Dorsolateral prefrontal cortex (tissue), 120 donors: ENCODE measurements at regions of chr2 and their contacts with region 1.

Region 1: DNA sequence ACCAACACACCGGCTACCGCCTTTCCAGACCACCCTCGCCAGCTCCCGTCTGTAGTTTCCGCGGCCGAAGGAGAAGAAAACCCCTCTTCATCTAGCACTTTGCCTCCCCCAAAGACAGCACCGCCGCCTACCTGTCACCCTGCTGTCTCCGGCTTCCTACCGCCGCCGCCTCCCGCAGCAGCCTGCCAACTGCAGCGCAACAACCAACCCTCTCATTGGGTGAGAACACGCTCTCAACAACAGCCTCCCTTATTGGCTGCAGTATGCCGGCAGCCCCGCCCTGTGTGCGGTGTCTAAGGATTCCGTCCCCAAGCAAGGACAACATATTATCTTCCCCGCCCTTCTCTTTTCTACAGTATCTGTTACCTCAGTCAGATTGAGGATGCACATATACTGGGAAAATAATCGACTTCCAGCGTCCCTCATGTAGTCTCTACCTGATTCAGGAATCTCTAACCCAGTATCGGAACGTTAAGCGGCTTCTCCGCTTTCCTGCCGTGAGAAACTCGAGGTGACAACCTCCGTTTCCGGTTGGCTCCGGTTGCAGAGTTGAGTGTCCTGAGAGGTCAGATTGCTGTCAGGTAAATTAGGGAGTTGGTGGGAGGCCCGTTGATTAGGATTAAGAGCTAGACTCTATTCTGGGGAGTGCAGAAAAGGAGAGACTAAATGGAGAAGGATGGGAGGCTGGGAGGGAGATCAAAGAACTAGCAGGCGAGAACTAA is at the starts of genes HYCC2 and NDUFB3:
- DNase-seq: peak; percentile 75 to 92 (median 90)
- H3K4me3 ChIP-seq: peak within 1 kb of the TSS; percentile 58 to 100 (median 95)
- H3K27ac ChIP-seq: peak within 1 kb of the TSS; percentile 69 to 98 (median 95)
- H3K27me3 ChIP-seq: no peaks in the 10 kb centered on the region
- CTCF ChIP-seq: peak in 54 of 56 donors; percentile 5 to 76 (median 46)
- total RNA-seq, gene HYCC2: 40.5 to 110 (median 79.7) TPM
- total RNA-seq, gene NDUFB3: 41.9 to 129 (median 85.4) TPM

Region 2: GRCh38 chr2:200609027-200609614 is 462.5 kb before region 1 on chr2:
- intact Hi-C with region 1: no loop called
- DNase-seq: no peak
- H3K4me3 ChIP-seq: no peak overlapping the region
- H3K27ac ChIP-seq: no peak overlapping the region
- H3K27me3 ChIP-seq: no peaks in the 10 kb centered on the region
- CTCF ChIP-seq: no peak

Region 3: GRCh38 chr2:200811336-200812121 is 260.1 kb before region 1 on chr2 and contains the start of gene BZW1:
- intact Hi-C with region 1: loop called in 1 of 2 experiments (anchors 5 kb)
- DNase-seq: peak; percentile 88 to 97 (median 95)
- H3K4me3 ChIP-seq: peak within 1 kb of the TSS; percentile 72 to 100 (median 95)
- H3K27ac ChIP-seq: peak within 1 kb of the TSS; percentile 84 to 100 (median 98)
- H3K27me3 ChIP-seq: no peaks in the 10 kb centered on the region
- CTCF ChIP-seq: peak in 8 of 56 donors; percentile 3 to 41 (median 20)
- total RNA-seq, gene BZW1: 80.5 to 158 (median 116) TPM

Region 4: DNA sequence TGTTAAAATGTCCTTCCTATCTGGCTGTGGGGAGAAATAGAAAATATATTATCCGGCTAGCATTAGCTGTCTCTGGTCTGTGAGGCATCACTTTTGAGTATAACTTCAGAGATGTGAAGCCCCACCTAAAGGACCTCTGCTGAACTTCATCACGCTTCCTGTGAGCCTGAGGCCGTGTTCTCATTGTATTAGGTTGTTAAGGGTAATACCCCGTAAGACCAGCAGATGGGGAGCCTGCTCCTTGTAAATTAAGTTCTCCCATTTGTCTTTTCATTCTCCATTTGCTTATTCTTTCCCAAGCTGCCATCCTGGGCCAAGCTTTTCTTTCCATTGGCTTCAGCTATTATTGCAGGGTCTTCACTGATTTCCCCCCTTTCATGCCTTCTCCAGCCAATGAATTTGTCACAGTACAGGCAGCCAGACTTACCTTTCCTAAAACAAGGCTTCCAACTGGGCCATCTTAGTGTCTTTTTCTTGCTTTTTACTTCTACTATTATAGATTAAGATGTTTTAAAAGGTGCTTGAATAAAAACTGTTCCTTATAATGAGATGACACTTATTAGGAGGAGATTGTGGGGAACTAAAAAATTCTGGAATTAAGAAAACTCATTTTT is 170.1 kb before region 1 on chr2:
- intact Hi-C with region 1: loop called (anchors 2 to 5 kb)
- DNase-seq: peak in 4 of 10 donors; percentile 9 to 67 (median 26)
- H3K4me3 ChIP-seq: peak overlapping the region in 1 of 59 donors; percentile 5
- H3K27ac ChIP-seq: peak overlapping the region in 5 of 59 donors; percentile 10 to 33 (median 19)
- H3K27me3 ChIP-seq: no peaks in the 10 kb centered on the region
- CTCF ChIP-seq: peak; percentile 23 to 79 (median 70)

Region 5: DNA sequence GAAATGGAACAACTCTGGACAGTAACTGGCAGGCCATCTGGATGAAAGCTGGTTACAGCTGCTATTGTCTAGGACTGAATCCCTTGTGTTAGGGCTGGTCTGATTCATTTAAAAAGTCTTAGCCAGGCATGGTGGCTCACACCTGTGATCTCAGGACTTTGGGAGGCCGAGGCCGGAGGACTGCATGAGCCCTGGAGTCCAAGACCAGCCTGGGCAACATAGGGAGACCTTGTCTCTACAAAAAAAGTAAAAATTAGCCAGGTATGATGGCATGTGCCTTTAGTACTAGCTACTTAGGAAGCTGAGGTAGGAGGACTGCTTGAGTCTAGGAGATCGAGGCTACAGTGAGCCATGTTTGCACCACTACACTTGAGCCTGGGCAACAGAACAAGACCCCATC is 28.9 kb after region 1 on chr2:
- intact Hi-C with region 1: no loop called
- DNase-seq: no peak
- H3K4me3 ChIP-seq: no peak overlapping the region
- H3K27ac ChIP-seq: no peak overlapping the region
- H3K27me3 ChIP-seq: no peaks in the 10 kb centered on the region
- CTCF ChIP-seq: no peak

Region 6: DNA sequence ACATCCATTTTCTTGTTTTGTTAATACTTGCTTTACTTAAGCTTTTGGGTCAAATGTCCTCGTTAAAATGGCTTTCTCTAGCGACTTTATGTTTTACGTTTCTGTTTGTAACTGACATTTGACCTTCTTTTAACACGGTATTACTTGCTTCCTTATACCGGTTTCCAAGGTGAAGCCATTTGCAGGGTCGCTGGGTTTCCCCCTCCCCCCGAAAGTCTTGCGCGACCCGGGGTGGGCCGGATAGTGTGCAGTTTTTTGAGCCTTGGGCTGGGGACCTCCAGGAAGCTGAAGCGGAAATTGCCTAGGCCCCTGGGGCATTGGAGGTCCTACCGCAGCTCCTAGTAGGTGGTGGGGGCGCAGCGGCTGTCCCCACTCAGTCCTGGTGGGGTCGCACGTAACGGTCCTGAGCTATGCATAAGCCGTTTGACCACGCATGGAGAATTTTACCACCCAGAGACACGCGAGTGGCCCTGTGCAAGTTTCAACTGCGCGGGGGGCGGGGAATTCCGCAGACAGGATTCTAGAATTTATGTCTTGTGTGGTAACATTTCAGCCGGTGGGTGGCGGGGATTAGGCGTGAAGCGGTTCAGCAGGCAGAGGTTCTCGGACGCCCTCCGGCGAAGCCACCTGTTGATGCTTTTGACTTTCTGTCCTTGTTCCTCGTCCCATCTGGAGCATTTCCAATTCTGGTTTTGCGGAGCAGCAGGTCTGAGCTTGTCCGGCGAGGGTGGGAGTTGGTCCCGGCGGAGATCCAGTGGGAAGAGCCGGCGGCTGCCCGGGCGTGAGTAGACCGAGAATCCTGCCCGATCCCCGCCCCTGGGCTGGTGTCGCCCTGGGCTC is 46.7 kb after region 1 on chr2:
- intact Hi-C with region 1: loop called (anchors 1 to 2 kb)
- DNase-seq: peak; percentile 68 to 85 (median 80)
- H3K4me3 ChIP-seq: peak overlapping the region; percentile 42 to 95 (median 84)
- H3K27ac ChIP-seq: peak overlapping the region; percentile 57 to 100 (median 98)
- H3K27me3 ChIP-seq: peaks cover 0 to 4% (median 0%) of the 10 kb centered on the region in 45 donors
- CTCF ChIP-seq: peak in 53 of 56 donors; percentile 24 to 73 (median 52)

Region 7: DNA sequence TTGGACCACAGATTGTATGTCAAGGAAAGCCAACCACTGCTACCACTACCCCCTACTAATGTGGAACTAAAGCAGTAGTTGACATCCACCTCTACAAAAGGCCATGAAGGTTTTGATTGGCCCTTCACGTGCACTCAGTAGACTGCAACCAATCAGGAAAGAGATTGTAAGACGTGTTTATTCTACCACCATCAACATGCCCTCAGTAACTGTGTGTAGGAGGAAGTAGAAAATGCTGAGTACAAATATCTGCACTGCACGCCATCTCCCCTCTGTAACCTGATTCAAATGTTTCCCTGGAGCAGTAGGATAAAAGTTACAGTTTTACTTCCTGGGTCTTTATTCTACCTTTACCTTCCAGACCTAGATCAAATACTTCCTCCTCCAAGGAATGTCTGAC is 108.4 kb after region 1 on chr2:
- intact Hi-C with region 1: loop called in 1 of 2 experiments (anchors 5 kb)
- DNase-seq: no peak
- H3K4me3 ChIP-seq: no peak overlapping the region
- H3K27ac ChIP-seq: no peak overlapping the region
- H3K27me3 ChIP-seq: no peaks in the 10 kb centered on the region
- CTCF ChIP-seq: no peak

Region 8: GRCh38 chr2:201220102-201220570 is 148.5 kb after region 1 on chr2:
- intact Hi-C with region 1: no loop called
- DNase-seq: no peak
- H3K4me3 ChIP-seq: no peak overlapping the region
- H3K27ac ChIP-seq: peak overlapping the region in 10 of 59 donors; percentile 14 to 53 (median 34)
- H3K27me3 ChIP-seq: no peaks in the 10 kb centered on the region
- CTCF ChIP-seq: no peak